ENCODE measurements at regions of chr15 and their contacts with region 1.

Region 1: DNA sequence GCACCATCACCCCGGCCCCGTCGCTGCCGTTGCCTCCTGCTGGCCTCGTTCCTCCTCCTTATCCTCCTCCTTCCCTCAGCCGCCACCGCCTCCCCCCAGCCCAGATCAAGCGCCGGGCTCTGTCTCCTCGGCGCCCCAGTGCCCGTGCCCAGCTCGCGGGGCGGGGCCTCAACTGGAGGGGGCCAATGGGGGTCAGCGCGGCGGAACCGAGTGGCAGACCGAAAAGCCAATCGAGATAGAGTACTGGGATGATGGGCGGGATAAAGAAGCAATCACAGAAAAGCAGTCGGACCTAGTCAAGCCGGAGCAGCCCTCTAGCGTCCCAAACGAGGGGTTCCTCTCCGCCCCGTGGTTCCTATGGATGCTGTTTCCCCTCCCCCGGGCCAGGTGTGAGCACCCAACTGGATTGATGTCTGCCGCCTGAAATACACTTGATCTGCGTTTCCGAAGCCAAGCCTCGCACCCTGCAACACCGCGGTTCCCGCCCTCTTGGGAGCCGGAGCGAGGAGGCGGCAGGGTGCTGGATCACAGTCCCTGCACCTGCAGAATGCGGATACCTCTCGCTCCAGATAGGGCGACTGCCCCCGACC is at the start of gene FRMD5:
- DNase-seq: peak; percentile 74
- ATAC-seq: peak; percentile 98
- H3K4me3 ChIP-seq: peak within 1 kb of the TSS; percentile 86
- H3K27ac ChIP-seq: no peak within 1 kb of the TSS
- H3K4me1 ChIP-seq: peaks cover 4% of the 10 kb centered on the region; the same call in 1 of the 2 replicates
- H3K27me3 ChIP-seq: peaks cover 5 to 11% of the 10 kb centered on the region in 2 experiments
- CTCF ChIP-seq: peak in 2 of 3 experiments; percentile 17 to 27; a peak in 1 of 6 replicates
- EP300 ChIP-seq: no peak
- POLR2A ChIP-seq: 0 out of 2 replicates have a peak, but pooled peaks have one; percentile 47
- RAD21 ChIP-seq: no peak
- polyA plus RNA-seq, gene FRMD5: 0.26 to 0.79 TPM

Region 2: GRCh38 chr15:44137750-44138149 is 57.5 kb before region 1 on chr15:
- CTCF ChIA-PET with region 1: no interaction called
- POLR2A ChIA-PET with region 1: no interaction called
- RAD21 ChIA-PET with region 1: no interaction called
- SMC1A ChIA-PET with region 1: no interaction called
- in situ Hi-C with region 1: no loop called
- intact Hi-C with region 1: loop called (anchors 10 kb)
- DNase-seq: no peak
- ATAC-seq: no peak
- H3K4me3 ChIP-seq: no peak overlapping the region
- H3K27ac ChIP-seq: no peak overlapping the region
- H3K4me1 ChIP-seq: no peaks in the 10 kb centered on the region
- H3K27me3 ChIP-seq: no peaks in the 10 kb centered on the region
- CTCF ChIP-seq: no peak
- EP300 ChIP-seq: no peak
- POLR2A ChIP-seq: no peak
- RAD21 ChIP-seq: no peak

Region 3: GRCh38 chr15:44308415-44308814 is 113.2 kb after region 1 on chr15:
- CTCF ChIA-PET with region 1: no interaction called
- POLR2A ChIA-PET with region 1: no interaction called
- RAD21 ChIA-PET with region 1: no interaction called
- SMC1A ChIA-PET with region 1: no interaction called
- in situ Hi-C with region 1: no loop called
- intact Hi-C with region 1: no loop called
- DNase-seq: peak; percentile 73
- ATAC-seq: peak; percentile 93
- H3K4me3 ChIP-seq: peak overlapping the region; percentile 47
- H3K27ac ChIP-seq: peak overlapping the region; percentile 83
- H3K4me1 ChIP-seq: peaks cover 42% of the 10 kb centered on the region
- H3K27me3 ChIP-seq: no peaks in the 10 kb centered on the region
- CTCF ChIP-seq: no peak
- EP300 ChIP-seq: peak; percentile 76 to 94; a peak in 3 of 4 replicates
- POLR2A ChIP-seq: no peak
- RAD21 ChIP-seq: no peak